BJ (cell line): ENCODE measurements at regions of chr4 and their contacts with region 1.

Region 1: GRCh38 chr4:81272671-81273070 is 57.6 kb upstream of the PRKG2 start:
- DNase-seq: no peak
- H3K4me3 ChIP-seq: no peak overlapping the region
- H3K27me3 ChIP-seq: no peaks in the 10 kb centered on the region
- CTCF ChIP-seq: no peak

Region 2: DNA sequence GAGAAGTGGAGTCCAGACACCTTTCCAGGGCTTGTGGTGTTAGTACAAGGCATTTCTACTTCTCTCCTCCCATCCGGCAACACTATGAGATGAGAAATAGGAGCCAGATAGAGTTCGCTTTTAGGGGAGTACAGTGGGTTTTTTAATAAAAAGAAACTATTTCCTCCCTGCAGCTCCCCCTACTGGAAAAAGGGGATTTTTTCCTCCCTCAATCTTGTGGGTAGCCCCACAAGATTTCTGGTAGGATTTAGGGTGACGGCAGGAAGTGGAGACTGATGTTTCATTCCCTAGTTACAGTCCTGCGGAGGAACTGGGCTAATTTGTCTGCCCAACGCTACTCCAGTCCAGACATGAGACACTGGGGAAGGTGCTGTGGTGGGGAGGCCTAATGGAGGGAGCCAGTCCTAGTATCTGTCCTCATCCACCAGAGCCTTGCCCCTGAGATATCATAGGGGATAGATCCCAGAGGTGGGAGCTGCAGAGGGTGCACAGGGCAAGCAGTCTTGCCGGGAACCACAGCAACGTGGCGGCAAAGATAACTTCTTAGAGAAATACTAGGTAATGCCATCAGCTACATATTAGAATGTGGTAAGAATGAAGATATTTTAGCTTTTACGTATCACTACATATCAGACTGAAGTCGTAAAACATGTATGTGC is 12.1 kb before region 1 on chr4:
- CTCF ChIA-PET with region 1: interaction called, 19 read pairs
- POLR2A ChIA-PET with region 1: no interaction called
- DNase-seq: no peak
- H3K4me3 ChIP-seq: no peak overlapping the region
- H3K27me3 ChIP-seq: no peaks in the 10 kb centered on the region
- CTCF ChIP-seq: peak; percentile 47